ENCODE measurements at regions of chr3 and their contacts with region 1.

Region 1: DNA sequence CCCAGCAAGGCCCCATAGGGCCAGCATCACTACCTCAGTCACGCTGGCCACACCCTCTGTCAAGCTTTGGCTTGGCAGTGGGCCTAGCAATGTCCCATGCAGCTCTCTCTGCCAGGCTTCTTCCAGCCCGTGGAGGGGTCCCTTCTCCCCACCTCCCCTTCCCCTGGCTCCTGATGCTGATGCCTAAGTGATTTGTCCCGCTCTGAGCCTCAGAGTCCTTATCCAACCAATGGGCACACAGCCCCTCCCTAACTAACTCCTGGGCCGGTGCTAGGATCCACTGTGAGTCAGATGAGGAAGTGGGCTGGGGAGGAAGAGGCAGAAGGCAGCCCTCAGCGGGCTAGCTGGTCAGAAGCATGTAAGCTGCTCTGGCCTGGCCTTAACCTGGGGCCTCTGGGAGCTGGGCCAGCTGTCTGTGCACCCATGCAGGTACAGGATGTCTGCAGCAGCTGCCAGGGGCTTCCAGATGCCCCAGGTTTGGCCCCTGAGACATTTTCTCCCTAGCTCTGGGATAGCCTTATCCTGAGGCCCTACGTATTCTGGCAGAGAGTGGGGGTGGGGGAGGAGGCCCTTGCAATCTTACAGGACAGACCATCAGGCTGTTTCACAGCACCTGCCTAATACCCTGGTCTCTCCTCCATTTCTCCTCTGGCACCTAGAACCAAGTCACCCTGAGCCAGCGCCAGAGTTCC is 740 bp upstream of the ZBTB47 start:
- DNase-seq: peak; percentile 53 to 55
- ATAC-seq: peak; percentile 10 to 64 (median 46)
- H3K4me3 ChIP-seq: peak overlapping the region; percentile 68 to 98 (median 84)
- H3K27ac ChIP-seq: peak overlapping the region; percentile 88 to 99 (median 95)
- H3K4me1 ChIP-seq: peaks cover 20 to 87% (median 60%) of the 10 kb centered on the region in 9 donors
- H3K27me3 ChIP-seq: no peaks in the 10 kb centered on the region
- CTCF ChIP-seq: no peak

Region 2: GRCh38 chr3:42581709-42582473 is 70.9 kb before region 1 on chr3 and contains the start of gene SEC22C:
- intact Hi-C with region 1: loop called in 3 of 10 experiments (anchors 5 to 10 kb)
- DNase-seq: peak; percentile 95
- ATAC-seq: peak; percentile 97 to 99 (median 99)
- H3K4me3 ChIP-seq: peak within 1 kb of the TSS; percentile 75 to 97 (median 88)
- H3K27ac ChIP-seq: peak within 1 kb of the TSS; percentile 62 to 95 (median 88)
- H3K4me1 ChIP-seq: peaks cover 0 to 26% (median 21%) of the 10 kb centered on the region in 9 donors
- H3K27me3 ChIP-seq: no peaks in the 10 kb centered on the region
- CTCF ChIP-seq: peak in 7 of 9 donors; percentile 13 to 59 (median 39)
- total RNA-seq, gene SEC22C: 23.8 to 32.9 (median 26.4) TPM

Region 3: DNA sequence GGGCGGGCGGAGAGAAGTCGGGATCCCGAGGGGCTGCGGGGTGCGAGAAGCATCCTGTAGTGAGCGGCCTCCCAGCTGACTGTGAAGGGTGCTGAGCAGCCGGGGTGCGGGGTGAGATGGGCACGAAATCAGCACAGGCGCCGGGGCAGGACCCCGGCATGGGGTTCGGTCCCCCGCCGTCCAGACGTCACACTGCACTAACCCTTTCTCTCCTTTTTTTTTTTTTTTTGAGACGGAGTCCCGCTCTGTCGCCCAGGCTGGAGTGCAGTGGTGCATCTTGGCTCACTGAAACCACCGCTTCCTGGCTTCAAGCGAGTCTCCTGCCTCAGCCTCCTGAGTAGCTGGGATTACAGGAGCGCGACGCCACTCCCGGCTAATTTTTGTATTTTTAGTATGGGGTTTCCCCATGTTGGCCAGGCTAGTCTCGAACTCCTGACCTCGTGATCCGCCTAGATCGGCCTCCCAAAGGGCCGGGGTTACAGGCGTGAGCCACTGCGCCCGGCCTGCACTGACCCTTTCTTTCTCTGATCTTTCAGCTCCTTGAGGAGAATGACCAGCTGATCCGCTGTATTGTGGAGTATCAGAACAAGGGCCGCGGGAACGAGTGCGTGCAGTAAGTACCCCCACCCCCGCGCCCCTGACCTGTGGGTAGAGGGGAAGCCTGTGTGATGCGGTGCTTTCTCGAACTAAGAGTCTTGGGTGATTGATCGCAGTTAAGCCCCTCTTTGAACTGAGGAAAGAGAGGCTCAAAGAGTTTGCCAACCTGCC is 61.6 kb before region 1 on chr3:
- intact Hi-C with region 1: loop called in 2 of 10 experiments (anchors 5 to 10 kb)
- DNase-seq: peak in 1 of 2 donors; percentile 11
- ATAC-seq: peak in 6 of 8 donors; percentile 16 to 71 (median 34)
- H3K4me3 ChIP-seq: peak overlapping the region; percentile 56 to 88 (median 71)
- H3K27ac ChIP-seq: peak overlapping the region in 9 of 10 donors; percentile 75 to 87 (median 83)
- H3K4me1 ChIP-seq: peaks cover 0 to 24% (median 9%) of the 10 kb centered on the region in 9 donors
- H3K27me3 ChIP-seq: no peaks in the 10 kb centered on the region
- CTCF ChIP-seq: no peak

Region 4: GRCh38 chr3:42600111-42600988 is 52.4 kb before region 1 on chr3 and contains the start of gene NKTR:
- intact Hi-C with region 1: loop called in 4 of 10 experiments (anchors 5 kb)
- DNase-seq: peak; percentile 97
- ATAC-seq: peak; percentile 93 to 97 (median 96)
- H3K4me3 ChIP-seq: peak within 1 kb of the TSS; percentile 77 to 96 (median 86)
- H3K27ac ChIP-seq: peak within 1 kb of the TSS; percentile 98 to 100 (median 98)
- H3K4me1 ChIP-seq: peaks cover 0 to 40% (median 24%) of the 10 kb centered on the region in 9 donors
- H3K27me3 ChIP-seq: no peaks in the 10 kb centered on the region
- CTCF ChIP-seq: peak in 3 of 9 donors; percentile 12 to 38 (median 16)
- total RNA-seq, gene NKTR: 19.7 to 28.4 (median 21.9) TPM

Region 5: GRCh38 chr3:42739401-42740158 is 86.8 kb after region 1 on chr3:
- intact Hi-C with region 1: loop called in 5 of 10 experiments (anchors 2 to 10 kb)
- DNase-seq: peak; percentile 85 to 92
- ATAC-seq: peak; percentile 87 to 97 (median 95)
- H3K4me3 ChIP-seq: no peak overlapping the region
- H3K27ac ChIP-seq: peak overlapping the region; percentile 80 to 99 (median 90)
- H3K4me1 ChIP-seq: peaks cover 4 to 47% (median 13%) of the 10 kb centered on the region in 9 donors
- H3K27me3 ChIP-seq: no peaks in the 10 kb centered on the region
- CTCF ChIP-seq: no peak

Region 6: DNA sequence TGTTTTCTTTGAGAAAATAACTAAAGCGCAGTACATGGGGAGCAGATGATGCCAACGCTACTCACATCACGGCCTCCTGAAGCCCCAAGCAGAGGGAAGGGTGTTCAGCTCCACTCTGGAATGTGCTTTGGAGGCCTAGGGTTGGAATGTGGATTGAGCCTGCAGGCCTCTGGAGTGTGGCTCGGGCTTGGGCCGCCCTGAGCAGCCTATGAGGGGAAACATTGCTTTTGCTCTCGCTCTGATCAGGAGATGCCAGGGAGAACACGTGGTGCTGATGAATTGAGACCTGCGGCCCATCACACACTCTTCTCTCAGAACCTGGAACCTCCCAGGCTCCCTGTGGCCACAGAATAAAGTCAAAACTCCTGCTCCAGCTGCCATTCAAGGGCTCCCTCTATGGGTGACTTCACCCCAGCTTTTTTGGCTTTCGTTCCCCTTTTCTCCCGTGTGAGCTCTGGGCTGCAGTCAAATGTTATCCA is 97.0 kb after region 1 on chr3:
- intact Hi-C with region 1: loop called in 7 of 10 experiments (anchors 2 to 10 kb)
- DNase-seq: no peak
- ATAC-seq: peak in 7 of 8 donors; percentile 4 to 51 (median 34)
- H3K4me3 ChIP-seq: no peak overlapping the region
- H3K27ac ChIP-seq: peak overlapping the region in 1 of 10 donors; percentile 21
- H3K4me1 ChIP-seq: peaks cover 0 to 28% (median 12%) of the 10 kb centered on the region in 9 donors
- H3K27me3 ChIP-seq: no peaks in the 10 kb centered on the region
- CTCF ChIP-seq: peak; percentile 12 to 60 (median 39)